Breast epithelium (tissue), 4 donors: ENCODE measurements at regions of chr4 and their contacts with region 1.

Region 1: DNA sequence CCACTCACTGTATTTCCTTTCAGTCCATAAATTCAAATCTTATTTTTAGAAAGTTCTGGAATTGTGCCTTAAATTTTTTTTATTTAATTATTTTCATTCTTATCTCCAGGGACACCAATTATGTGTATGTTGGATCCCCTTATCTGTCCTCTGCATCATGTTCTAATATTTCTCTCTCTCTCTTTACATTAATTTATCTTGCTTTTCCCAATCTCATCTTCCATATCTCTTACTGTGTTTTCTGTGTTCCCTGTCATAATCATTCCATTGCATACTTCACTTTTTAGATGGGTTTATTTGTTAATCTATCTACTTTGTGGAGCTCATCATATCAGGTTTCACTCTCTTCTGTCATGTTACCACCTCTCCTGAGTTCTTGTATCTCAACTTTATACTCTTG is 37.4 kb downstream of the PPP2R2C start:
- DNase-seq: no peak
- H3K4me3 ChIP-seq: no peak overlapping the region
- H3K27ac ChIP-seq: no peak overlapping the region
- H3K4me1 ChIP-seq: no peaks in the 10 kb centered on the region
- H3K27me3 ChIP-seq: no peaks in the 10 kb centered on the region
- CTCF ChIP-seq: no peak
- POLR2A ChIP-seq: no peak

Region 2: GRCh38 chr4:6349896-6350603 is 85.0 kb before region 1 on chr4:
- intact Hi-C with region 1: no loop called
- DNase-seq: no peak
- H3K4me3 ChIP-seq: no peak overlapping the region
- H3K27ac ChIP-seq: no peak overlapping the region
- H3K4me1 ChIP-seq: no peaks in the 10 kb centered on the region
- H3K27me3 ChIP-seq: peaks cover 0 to 10% of the 10 kb centered on the region in 2 donors
- CTCF ChIP-seq: no peak
- POLR2A ChIP-seq: no peak

Region 3: DNA sequence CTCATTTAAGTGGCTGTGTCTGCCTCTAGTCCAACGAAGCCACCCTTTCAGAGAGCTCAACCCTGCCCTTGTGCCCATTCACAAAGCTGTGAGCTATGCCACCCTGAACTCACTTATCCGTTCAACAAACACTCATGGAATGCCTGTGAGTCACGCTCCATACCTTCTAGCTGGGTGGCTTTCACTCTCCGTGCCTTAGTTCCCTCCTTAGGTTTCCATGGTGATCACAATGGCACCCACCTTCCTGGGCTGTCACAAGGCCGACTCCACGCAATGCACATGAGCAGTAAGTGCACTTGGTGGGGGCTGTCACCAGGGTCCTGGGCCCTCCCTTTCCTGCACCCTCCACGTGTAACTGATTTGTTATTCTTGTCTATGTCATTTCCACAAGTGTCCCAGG is 74.6 kb after region 1 on chr4:
- intact Hi-C with region 1: loop called (anchors 2 kb)
- DNase-seq: peak in 1 of 2 donors; percentile 20
- H3K4me3 ChIP-seq: no peak overlapping the region
- H3K27ac ChIP-seq: no peak overlapping the region
- H3K4me1 ChIP-seq: no peaks in the 10 kb centered on the region
- H3K27me3 ChIP-seq: no peaks in the 10 kb centered on the region
- CTCF ChIP-seq: no peak
- POLR2A ChIP-seq: no peak

Region 4: GRCh38 chr4:7679406-7680040 is 1244.5 kb after region 1 on chr4:
- intact Hi-C with region 1: loop called (anchors 5 kb)
- DNase-seq: peak in 1 of 2 donors; percentile 34
- H3K4me3 ChIP-seq: no peak overlapping the region
- H3K27ac ChIP-seq: no peak overlapping the region
- H3K4me1 ChIP-seq: no peaks in the 10 kb centered on the region
- H3K27me3 ChIP-seq: no peaks in the 10 kb centered on the region
- CTCF ChIP-seq: no peak
- POLR2A ChIP-seq: no peak